CD8-positive, alpha-beta T cell (primary cell): ENCODE measurements at regions of chr3 and their contacts with region 1.

Region 1: DNA sequence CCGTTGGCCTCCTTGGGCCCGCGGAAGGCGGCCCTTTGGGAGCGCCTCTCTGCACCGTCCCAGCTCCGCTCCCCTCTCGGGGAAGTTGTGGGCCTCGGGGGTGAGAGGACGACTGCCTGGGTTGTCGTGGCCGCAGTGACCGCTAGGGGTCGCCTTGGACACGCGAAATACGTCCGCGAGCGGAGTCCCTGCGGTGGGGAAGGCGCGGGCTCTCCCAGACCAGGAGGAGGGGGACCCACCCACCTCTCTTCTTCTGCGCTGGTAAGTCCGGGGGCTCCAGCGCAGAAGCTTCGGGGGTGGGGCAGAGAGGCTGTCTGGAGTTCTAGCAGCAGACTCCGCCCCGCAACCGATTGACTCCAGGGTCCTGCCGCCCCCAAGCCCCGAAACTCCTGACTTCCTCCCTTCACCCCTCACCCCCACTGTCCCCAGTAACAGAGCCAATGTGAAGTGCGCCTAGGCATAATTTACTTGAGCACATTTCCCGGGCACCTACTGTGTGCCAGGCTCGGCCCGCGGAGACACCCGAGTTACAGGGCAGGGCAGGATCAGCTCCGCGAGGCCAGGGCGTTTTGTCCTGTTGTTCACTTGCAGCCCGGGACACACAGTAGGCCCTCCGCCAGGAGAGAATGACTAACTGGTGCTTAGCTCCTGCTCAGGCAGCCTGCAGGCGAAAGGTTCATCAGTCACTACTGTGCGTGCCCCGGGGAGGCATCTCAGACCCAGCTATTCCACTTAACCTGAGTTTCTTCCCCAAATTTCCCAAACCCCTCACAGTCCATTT is 32.8 kb downstream of the DNASE1L3 start:
- DNase-seq: peak; percentile 74 to 95 (median 87)
- ATAC-seq: peak; percentile 94
- H3K4me3 ChIP-seq: peak overlapping the region; percentile 34 to 48
- H3K4me3 Mint-ChIP-seq: peak overlapping the region; percentile 69
- H3K27ac ChIP-seq: no peak overlapping the region
- H3K27ac Mint-ChIP-seq: no peak overlapping the region
- H3K4me1 ChIP-seq: peaks cover 14% of the 10 kb centered on the region
- H3K4me1 Mint-ChIP-seq: peaks cover 13% of the 10 kb centered on the region
- H3K27me3 ChIP-seq: peaks cover 0 to 2% of the 10 kb centered on the region in 2 experiments
- H3K27me3 Mint-ChIP-seq: peaks cover 9% of the 10 kb centered on the region
- CTCF ChIP-seq: peak; percentile 79

Region 2: DNA sequence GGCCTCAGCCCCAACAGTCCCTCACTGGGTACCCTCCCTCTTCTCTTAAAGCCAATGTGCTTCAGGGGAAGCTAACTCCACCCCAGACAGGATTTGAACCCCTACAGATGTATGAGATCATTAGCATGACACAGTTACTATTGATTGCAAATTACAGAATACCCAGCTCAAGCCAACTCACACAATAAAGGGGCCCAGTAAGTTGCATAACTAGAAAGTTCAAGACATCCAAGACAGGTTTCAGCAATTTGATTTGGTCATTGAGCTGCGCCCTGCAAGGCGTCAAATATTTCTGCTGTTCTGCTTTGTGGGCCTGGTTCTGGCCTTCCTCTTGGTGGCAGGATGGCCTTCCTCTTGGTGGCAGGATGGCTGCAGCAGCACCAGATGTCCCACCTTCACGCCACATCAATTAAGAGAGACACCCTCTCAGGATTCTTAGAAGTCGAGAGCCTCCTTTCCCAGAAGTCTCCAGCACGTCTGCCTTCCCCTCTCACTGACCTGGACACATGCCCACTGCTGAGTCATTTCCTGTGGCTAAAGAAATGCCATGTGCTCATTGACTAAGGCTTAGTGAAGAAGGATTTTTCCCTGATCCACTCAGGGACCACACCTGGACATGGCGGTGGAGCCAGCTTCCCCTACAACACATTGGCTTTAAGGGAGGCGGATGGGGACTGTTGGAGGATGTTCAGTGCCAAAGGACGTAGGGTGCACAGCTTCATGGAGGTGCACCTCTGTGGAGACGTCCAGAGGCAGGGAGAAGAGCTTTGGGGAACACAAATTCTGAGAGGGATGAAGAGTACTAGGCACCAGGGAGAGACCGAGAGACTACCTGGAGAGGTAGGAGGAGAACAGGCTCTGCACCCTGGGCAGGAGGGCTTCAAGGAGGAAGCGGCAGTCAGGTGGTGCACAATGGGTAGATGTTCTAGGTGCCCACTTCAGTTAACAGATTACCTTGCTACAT is 16.2 kb before region 1 on chr3:
- CTCF ChIA-PET with region 1: interaction called, 43 read pairs
- POLR2A ChIA-PET with region 1: no interaction called
- intact Hi-C with region 1: no loop called
- DNase-seq: no peak
- ATAC-seq: no peak
- H3K4me3 ChIP-seq: no peak overlapping the region
- H3K4me3 Mint-ChIP-seq: no peak overlapping the region
- H3K27ac ChIP-seq: no peak overlapping the region
- H3K27ac Mint-ChIP-seq: no peak overlapping the region
- H3K4me1 ChIP-seq: no peaks in the 10 kb centered on the region
- H3K4me1 Mint-ChIP-seq: no peaks in the 10 kb centered on the region
- H3K27me3 ChIP-seq: no peaks in the 10 kb centered on the region
- H3K27me3 Mint-ChIP-seq: no peaks in the 10 kb centered on the region
- CTCF ChIP-seq: no peak

Region 3: DNA sequence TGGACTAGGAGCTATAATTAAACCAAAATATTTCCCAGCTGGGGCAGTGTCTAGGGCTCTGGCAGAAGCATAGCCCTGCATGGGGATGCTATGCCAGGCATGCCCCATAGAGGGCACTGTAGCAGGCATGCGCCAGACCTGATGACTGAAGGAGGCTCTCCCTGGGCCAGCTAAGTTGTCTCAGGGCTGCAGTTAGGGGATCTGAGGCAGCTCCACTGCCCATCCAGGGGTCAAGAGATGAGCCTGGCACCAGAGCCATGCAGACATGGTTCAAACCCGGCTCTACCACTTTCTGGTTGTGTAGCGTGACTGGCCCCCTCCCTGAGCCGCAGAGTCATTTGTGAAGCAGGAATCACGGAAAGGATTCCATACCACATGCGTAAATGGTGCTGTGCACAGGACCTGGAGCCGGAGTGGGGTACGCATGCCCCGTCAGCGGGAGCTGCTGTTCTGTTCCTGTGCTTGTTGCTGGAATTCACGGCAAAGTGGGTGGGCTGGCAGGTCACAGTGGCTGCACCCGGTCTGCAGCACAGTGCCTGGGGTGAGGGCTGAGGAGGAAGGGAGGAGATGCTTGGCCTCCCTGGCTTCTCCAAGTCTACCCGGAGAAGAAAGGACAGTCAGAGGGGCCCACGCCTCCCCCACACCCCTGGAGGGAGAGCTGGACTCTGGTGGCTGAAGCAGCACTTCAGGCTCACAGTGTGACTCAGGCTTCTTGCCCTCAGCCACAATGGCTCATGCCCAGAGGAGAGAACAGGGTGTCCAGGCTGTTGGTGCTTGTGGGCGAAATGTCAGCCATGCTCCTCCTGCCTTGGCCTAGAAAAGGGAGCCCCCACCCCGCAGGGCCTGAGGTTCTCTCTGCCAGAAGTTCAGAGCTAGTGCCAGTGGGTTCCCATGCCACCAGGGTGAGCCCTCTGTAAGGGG is 10.2 kb before region 1 on chr3:
- CTCF ChIA-PET with region 1: interaction called, 43 read pairs
- POLR2A ChIA-PET with region 1: no interaction called
- intact Hi-C with region 1: no loop called
- DNase-seq: peak in 8 of 9 experiments; percentile 35 to 70 (median 55)
- ATAC-seq: peak; percentile 91
- H3K4me3 ChIP-seq: no peak overlapping the region
- H3K4me3 Mint-ChIP-seq: no peak overlapping the region
- H3K27ac ChIP-seq: no peak overlapping the region
- H3K27ac Mint-ChIP-seq: no peak overlapping the region
- H3K4me1 ChIP-seq: no peaks in the 10 kb centered on the region
- H3K4me1 Mint-ChIP-seq: no peaks in the 10 kb centered on the region
- H3K27me3 ChIP-seq: no peaks in the 10 kb centered on the region
- H3K27me3 Mint-ChIP-seq: no peaks in the 10 kb centered on the region
- CTCF ChIP-seq: peak; percentile 66

Region 4: DNA sequence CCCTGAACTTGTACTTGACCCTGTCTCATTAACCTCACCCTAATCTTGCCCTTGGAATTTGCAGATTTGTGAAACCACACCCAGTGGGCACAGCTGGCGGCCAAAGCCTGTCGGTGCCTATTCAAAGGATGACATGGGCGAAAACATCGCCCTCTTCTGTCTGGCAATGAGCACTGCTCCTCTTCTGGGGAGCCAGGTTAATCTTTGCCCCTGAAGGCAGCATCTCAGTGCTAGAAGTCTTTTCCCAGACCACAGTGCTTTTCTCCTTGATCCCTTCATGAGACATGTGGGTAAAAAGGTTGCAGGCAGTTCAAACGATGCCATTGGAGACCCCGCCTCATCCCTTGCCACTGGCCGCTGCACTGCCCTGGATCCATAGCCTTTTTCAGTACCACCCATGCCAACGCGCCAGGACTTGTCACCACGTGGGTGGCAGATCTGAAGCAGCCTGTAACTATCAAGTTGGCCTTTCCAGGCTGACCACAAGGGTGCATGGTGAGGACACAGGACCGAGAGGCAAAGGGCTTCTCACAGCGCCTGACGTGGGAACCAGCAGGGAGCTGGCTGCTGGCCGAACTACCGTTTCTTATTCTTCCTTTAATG is 39.4 kb after region 1 on chr3:
- CTCF ChIA-PET with region 1: interaction called, 103 read pairs
- POLR2A ChIA-PET with region 1: no interaction called
- intact Hi-C with region 1: loop called (anchors 1 to 5 kb)
- DNase-seq: peak; percentile 16 to 80 (median 55)
- ATAC-seq: peak; percentile 90
- H3K4me3 ChIP-seq: no peak overlapping the region
- H3K4me3 Mint-ChIP-seq: peak overlapping the region; percentile 16
- H3K27ac ChIP-seq: no peak overlapping the region
- H3K27ac Mint-ChIP-seq: no peak overlapping the region
- H3K4me1 ChIP-seq: peaks cover 4% of the 10 kb centered on the region
- H3K4me1 Mint-ChIP-seq: peaks cover 7% of the 10 kb centered on the region
- H3K27me3 ChIP-seq: no peaks in the 10 kb centered on the region
- H3K27me3 Mint-ChIP-seq: no peaks in the 10 kb centered on the region
- CTCF ChIP-seq: peak; percentile 78

Region 5: DNA sequence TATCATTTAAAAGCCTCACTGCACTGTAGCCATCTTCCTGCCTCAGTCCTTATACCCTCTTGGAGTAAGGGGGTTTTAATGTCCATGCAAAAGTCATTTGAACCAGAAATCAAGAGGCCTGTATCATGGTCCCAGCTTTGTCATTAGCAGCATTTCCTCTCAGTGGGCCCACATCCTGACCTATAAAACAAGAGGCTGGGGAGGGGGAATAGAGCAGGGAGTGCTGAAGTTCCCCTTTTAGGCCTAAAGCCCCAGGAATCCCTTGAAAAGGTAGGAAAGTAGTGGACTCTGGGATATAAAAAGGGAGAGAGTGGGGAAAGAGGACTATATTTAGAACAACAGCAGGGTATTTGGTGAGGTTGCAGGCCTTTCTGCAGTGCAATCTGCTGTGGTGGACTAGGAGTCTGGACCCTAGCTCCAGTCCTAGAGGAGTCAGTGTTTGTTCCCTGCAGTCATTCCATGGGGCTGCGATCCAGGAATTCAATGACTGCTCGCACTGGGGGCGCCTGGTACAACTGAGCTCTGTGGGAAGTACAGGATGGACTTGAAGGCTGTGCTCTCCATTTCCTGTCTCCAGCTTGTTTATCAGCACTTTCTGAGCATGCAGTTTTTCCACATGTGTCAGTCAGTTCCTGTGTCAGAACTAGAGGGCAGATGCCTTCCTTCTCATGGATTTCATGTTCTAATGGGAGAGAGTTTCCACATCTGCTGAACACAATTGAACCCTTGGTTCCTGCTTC is 208.9 kb after region 1 on chr3:
- CTCF ChIA-PET with region 1: no interaction called
- POLR2A ChIA-PET with region 1: no interaction called
- intact Hi-C with region 1: no loop called
- DNase-seq: no peak
- ATAC-seq: no peak
- H3K4me3 ChIP-seq: no peak overlapping the region
- H3K4me3 Mint-ChIP-seq: no peak overlapping the region
- H3K27ac ChIP-seq: no peak overlapping the region
- H3K27ac Mint-ChIP-seq: no peak overlapping the region
- H3K4me1 ChIP-seq: no peaks in the 10 kb centered on the region
- H3K4me1 Mint-ChIP-seq: no peaks in the 10 kb centered on the region
- H3K27me3 ChIP-seq: no peaks in the 10 kb centered on the region
- H3K27me3 Mint-ChIP-seq: no peaks in the 10 kb centered on the region
- CTCF ChIP-seq: no peak

Region 6: GRCh38 chr3:58414538-58415197 is 236.7 kb after region 1 on chr3:
- CTCF ChIA-PET with region 1: interaction called, 5 read pairs
- POLR2A ChIA-PET with region 1: no interaction called
- intact Hi-C with region 1: loop called in 1 of 2 experiments (anchors 5 kb)
- DNase-seq: peak in 6 of 9 experiments; percentile 23 to 72 (median 42)
- ATAC-seq: peak; percentile 91
- H3K4me3 ChIP-seq: no peak overlapping the region
- H3K4me3 Mint-ChIP-seq: no peak overlapping the region
- H3K27ac ChIP-seq: no peak overlapping the region
- H3K27ac Mint-ChIP-seq: no peak overlapping the region
- H3K4me1 ChIP-seq: no peaks in the 10 kb centered on the region
- H3K4me1 Mint-ChIP-seq: no peaks in the 10 kb centered on the region
- H3K27me3 ChIP-seq: no peaks in the 10 kb centered on the region
- H3K27me3 Mint-ChIP-seq: no peaks in the 10 kb centered on the region
- CTCF ChIP-seq: peak; percentile 60

Region 7: GRCh38 chr3:59043391-59043790 is 865.5 kb after region 1 on chr3:
- CTCF ChIA-PET with region 1: no interaction called
- POLR2A ChIA-PET with region 1: no interaction called
- intact Hi-C with region 1: no loop called
- DNase-seq: no peak
- ATAC-seq: no peak
- H3K4me3 ChIP-seq: no peak overlapping the region
- H3K4me3 Mint-ChIP-seq: no peak overlapping the region
- H3K27ac ChIP-seq: no peak overlapping the region
- H3K27ac Mint-ChIP-seq: no peak overlapping the region
- H3K4me1 ChIP-seq: no peaks in the 10 kb centered on the region
- H3K4me1 Mint-ChIP-seq: no peaks in the 10 kb centered on the region
- H3K27me3 ChIP-seq: no peaks in the 10 kb centered on the region
- H3K27me3 Mint-ChIP-seq: no peaks in the 10 kb centered on the region
- CTCF ChIP-seq: no peak